Heart left ventricle (tissue), 16 donors: ENCODE measurements at regions of chr1 and their contacts with region 1.

Region 1: GRCh38 chr1:100921109-100921706 is 25.3 kb downstream of the SLC30A7 start:
- DNase-seq: no peak
- ATAC-seq: peak in 1 of 4 donors; percentile 45
- H3K4me3 ChIP-seq: no peak overlapping the region
- H3K27ac ChIP-seq: no peak overlapping the region
- H3K4me1 ChIP-seq: no peaks in the 10 kb centered on the region
- H3K27me3 ChIP-seq: no peaks in the 10 kb centered on the region
- CTCF ChIP-seq: peak; percentile 66 to 90 (median 74)
- POLR2A ChIP-seq: no peak

Region 2: GRCh38 chr1:101025657-101026504 is 104.7 kb after region 1 on chr1 and contains the start of gene DPH5:
- intact Hi-C with region 1: loop called in 4 of 10 experiments (anchors 10 kb)
- DNase-seq: peak; percentile 88 to 95 (median 94)
- ATAC-seq: peak; percentile 98 to 99 (median 98)
- H3K4me3 ChIP-seq: peak within 1 kb of the TSS; percentile 44 to 88 (median 72)
- H3K27ac ChIP-seq: peak within 1 kb of the TSS; percentile 56 to 93 (median 88)
- H3K4me1 ChIP-seq: peaks cover 0 to 56% (median 18%) of the 10 kb centered on the region in 12 donors
- H3K27me3 ChIP-seq: no peaks in the 10 kb centered on the region
- CTCF ChIP-seq: no peak
- POLR2A ChIP-seq: no peak
- total RNA-seq, gene DPH5: 14.8 to 36.2 (median 26.5) TPM

Region 3: GRCh38 chr1:101128211-101128727 is 207.1 kb after region 1 on chr1:
- intact Hi-C with region 1: loop called in 3 of 10 experiments (anchors 10 kb)
- DNase-seq: no peak
- ATAC-seq: peak in 2 of 4 donors; percentile 20 to 65
- H3K4me3 ChIP-seq: no peak overlapping the region
- H3K27ac ChIP-seq: peak overlapping the region in 3 of 12 donors; percentile 5 to 18 (median 15)
- H3K4me1 ChIP-seq: peaks cover 0 to 13% (median 3%) of the 10 kb centered on the region in 12 donors
- H3K27me3 ChIP-seq: no peaks in the 10 kb centered on the region
- CTCF ChIP-seq: no peak
- POLR2A ChIP-seq: no peak

Region 4: DNA sequence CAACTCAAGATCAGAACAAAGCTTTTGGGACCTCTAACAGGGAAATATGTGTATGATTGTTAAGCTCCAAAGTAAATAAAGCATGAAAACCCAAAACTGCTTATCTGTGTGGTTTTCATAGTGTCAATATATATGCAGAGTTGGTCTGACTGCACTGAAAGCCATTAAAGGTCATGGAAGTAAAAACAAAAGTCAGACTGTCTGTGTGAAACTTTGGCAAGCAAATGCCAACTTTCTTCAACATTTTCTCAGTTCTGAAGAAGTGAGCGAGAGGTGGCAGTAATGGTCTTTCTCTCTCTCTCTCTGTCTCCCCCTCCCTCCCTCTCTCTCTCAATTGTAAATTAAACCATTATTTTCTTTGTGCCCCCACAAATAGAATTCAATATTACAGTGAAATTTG is 215.5 kb after region 1 on chr1:
- intact Hi-C with region 1: loop called in 3 of 10 experiments (anchors 5 to 10 kb)
- DNase-seq: no peak
- ATAC-seq: peak; percentile 34 to 68 (median 59)
- H3K4me3 ChIP-seq: no peak overlapping the region
- H3K27ac ChIP-seq: peak overlapping the region in 3 of 12 donors; percentile 23 to 33 (median 25)
- H3K4me1 ChIP-seq: peaks cover 0 to 38% (median 21%) of the 10 kb centered on the region in 12 donors
- H3K27me3 ChIP-seq: no peaks in the 10 kb centered on the region
- CTCF ChIP-seq: peak in 9 of 12 donors; percentile 22 to 57 (median 43)
- POLR2A ChIP-seq: no peak

Region 5: DNA sequence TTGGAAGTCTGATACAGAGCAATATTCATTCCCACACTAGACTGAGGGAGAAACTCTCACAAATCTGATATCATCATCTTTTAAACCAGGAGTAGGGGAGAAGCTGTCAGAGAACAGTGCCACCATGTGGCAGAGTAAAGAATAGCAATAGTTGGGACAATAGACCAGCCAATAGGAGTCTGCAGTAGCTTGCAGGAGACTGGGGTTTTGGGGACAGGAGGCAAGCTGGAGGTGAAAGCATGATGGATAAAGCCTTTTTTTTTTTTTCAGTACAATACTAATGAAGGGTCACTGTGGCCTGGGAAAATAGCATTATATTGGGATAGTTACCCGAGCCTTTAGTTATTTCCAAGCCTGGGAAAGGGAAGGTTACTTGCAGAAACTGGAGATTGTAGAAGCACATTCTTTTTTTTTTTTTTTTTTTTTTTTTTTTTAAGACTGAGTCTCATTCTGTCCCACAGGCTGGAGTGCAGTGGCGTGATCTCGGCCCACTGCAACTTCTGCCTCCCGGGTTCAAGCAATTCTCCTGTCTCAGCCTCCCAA is 436.3 kb after region 1 on chr1:
- intact Hi-C with region 1: loop called (anchors 5 to 10 kb)
- DNase-seq: peak in 3 of 5 donors; percentile 26 to 46 (median 44)
- ATAC-seq: peak; percentile 37 to 88 (median 87)
- H3K4me3 ChIP-seq: no peak overlapping the region
- H3K27ac ChIP-seq: no peak overlapping the region
- H3K4me1 ChIP-seq: no peaks in the 10 kb centered on the region
- H3K27me3 ChIP-seq: peaks cover 0 to 10% (median 0%) of the 10 kb centered on the region in 9 donors
- CTCF ChIP-seq: peak; percentile 70 to 90 (median 82)
- POLR2A ChIP-seq: no peak